HEK293 (cell line): ENCODE measurements at regions of chr16 and their contacts with region 1.

Region 1: GRCh38 chr16:8634991-8635736 is 13.7 kb downstream of the METTL22 start:
- H3K4me3 ChIP-seq: no peak overlapping the region
- H3K27ac ChIP-seq: no peak overlapping the region
- H3K4me1 ChIP-seq: no peaks in the 10 kb centered on the region
- CTCF ChIP-seq: peak; percentile 58; the same call in 1 of the 2 replicates

Region 2: GRCh38 chr16:8567750-8568617 is 67.2 kb before region 1 on chr16:
- CTCF ChIA-PET with region 1: interaction called, 13 read pairs
- POLR2A ChIA-PET with region 1: no interaction called
- H3K4me3 ChIP-seq: no peak overlapping the region
- H3K27ac ChIP-seq: no peak overlapping the region
- H3K4me1 ChIP-seq: no peaks in the 10 kb centered on the region
- CTCF ChIP-seq: peak; percentile 97

Region 3: DNA sequence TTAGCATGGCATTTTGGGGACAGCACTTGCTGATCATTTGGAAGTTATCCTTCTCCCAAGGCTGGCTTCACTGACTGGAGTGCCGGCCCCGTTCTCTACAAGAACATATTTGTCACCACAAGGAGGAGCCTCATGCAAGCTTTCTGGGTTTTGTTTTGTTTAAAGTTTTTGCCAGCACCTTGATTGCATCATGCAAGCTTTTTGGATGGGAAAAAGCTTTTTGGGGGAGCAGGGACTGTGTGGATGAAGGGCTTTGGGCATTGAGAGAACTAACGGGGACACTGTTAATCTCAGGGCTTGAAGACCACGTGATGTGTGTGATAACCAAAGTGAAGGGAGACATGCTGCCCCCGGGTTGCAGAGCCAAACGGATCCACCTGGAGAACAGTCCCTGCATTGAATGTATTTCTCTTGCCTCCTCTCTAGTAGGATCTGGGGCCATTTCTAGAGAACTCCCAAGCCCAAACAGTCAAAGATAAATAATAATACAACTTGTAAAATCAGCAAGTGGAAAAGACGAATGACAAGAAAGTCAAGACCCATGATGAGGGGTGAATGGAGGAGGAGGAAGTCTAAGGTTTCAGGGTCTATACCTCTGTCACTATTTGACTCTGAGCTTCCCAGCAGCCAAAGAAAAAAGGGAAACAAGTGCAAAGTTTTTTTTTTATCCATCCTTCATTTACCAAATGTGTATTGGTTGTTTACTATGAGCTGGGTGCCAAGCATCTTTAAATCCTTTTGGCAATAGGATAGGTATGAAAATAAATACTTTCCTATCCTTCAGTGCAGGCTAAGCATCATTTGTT is 62.0 kb before region 1 on chr16:
- CTCF ChIA-PET with region 1: interaction called, 13 read pairs
- POLR2A ChIA-PET with region 1: no interaction called
- H3K4me3 ChIP-seq: no peak overlapping the region
- H3K27ac ChIP-seq: no peak overlapping the region
- H3K4me1 ChIP-seq: no peaks in the 10 kb centered on the region
- CTCF ChIP-seq: no peak